Activated CD4-positive, alpha-beta T cell treated with anti-CD3 and anti-CD28 coated beads for 36 hours (primary cell): ENCODE measurements at regions of chr14 and their contacts with region 1.

Region 1: GRCh38 chr14:71320107-71320733 is 413.0 kb downstream of the PCNX1 start:
- DNase-seq: peak; percentile 99
- ATAC-seq: peak; percentile 87
- H3K4me3 Mint-ChIP-seq: peak within 1 kb of the TSS; percentile 92
- H3K27ac Mint-ChIP-seq: peak within 1 kb of the TSS; percentile 89
- H3K4me1 Mint-ChIP-seq: peaks cover 39% of the 10 kb centered on the region
- H3K27me3 Mint-ChIP-seq: no peaks in the 10 kb centered on the region

Region 2: GRCh38 chr14:70655110-70655826 is 665.0 kb before region 1 on chr14:
- CTCF ChIA-PET with region 1: no interaction called
- POLR2A ChIA-PET with region 1: no interaction called
- intact Hi-C with region 1: loop called in 1 of 2 experiments (anchors 10 kb)
- DNase-seq: peak; percentile 82
- ATAC-seq: peak; percentile 80
- H3K4me3 Mint-ChIP-seq: peak overlapping the region; percentile 76
- H3K27ac Mint-ChIP-seq: peak overlapping the region; percentile 99
- H3K4me1 Mint-ChIP-seq: peaks cover 90% of the 10 kb centered on the region
- H3K27me3 Mint-ChIP-seq: no peaks in the 10 kb centered on the region

Region 3: GRCh38 chr14:71021347-71022014 is 298.7 kb before region 1 on chr14:
- CTCF ChIA-PET with region 1: no interaction called
- POLR2A ChIA-PET with region 1: interaction called, 3 read pairs
- intact Hi-C with region 1: loop called in 1 of 2 experiments (anchors 1 kb)
- DNase-seq: no peak
- ATAC-seq: peak; percentile 86
- H3K4me3 Mint-ChIP-seq: peak overlapping the region; percentile 4
- H3K27ac Mint-ChIP-seq: peak overlapping the region; percentile 68
- H3K4me1 Mint-ChIP-seq: peaks cover 33% of the 10 kb centered on the region
- H3K27me3 Mint-ChIP-seq: no peaks in the 10 kb centered on the region

Region 4: GRCh38 chr14:71267007-71267513 is 53.2 kb before region 1 on chr14:
- CTCF ChIA-PET with region 1: no interaction called
- POLR2A ChIA-PET with region 1: no interaction called
- intact Hi-C with region 1: loop called (anchors 1 to 2 kb)
- DNase-seq: peak; percentile 26
- ATAC-seq: peak; percentile 88
- H3K4me3 Mint-ChIP-seq: no peak overlapping the region
- H3K27ac Mint-ChIP-seq: no peak overlapping the region
- H3K4me1 Mint-ChIP-seq: peaks cover 19% of the 10 kb centered on the region
- H3K27me3 Mint-ChIP-seq: no peaks in the 10 kb centered on the region

Region 5: GRCh38 chr14:71371711-71372396 is 51.6 kb after region 1 on chr14:
- CTCF ChIA-PET with region 1: interaction called, 3 read pairs
- POLR2A ChIA-PET with region 1: no interaction called
- intact Hi-C with region 1: loop called in 1 of 2 experiments (anchors 5 kb)
- DNase-seq: peak; percentile 20
- ATAC-seq: peak; percentile 97
- H3K4me3 Mint-ChIP-seq: no peak overlapping the region
- H3K27ac Mint-ChIP-seq: no peak overlapping the region
- H3K4me1 Mint-ChIP-seq: peaks cover 24% of the 10 kb centered on the region
- H3K27me3 Mint-ChIP-seq: no peaks in the 10 kb centered on the region

Region 6: GRCh38 chr14:71555654-71556559 is 235.7 kb after region 1 on chr14:
- CTCF ChIA-PET with region 1: interaction called, 5 read pairs
- POLR2A ChIA-PET with region 1: interaction called, 11 read pairs
- intact Hi-C with region 1: loop called (anchors 1 kb)
- DNase-seq: peak; percentile 81
- ATAC-seq: peak; percentile 86
- H3K4me3 Mint-ChIP-seq: peak overlapping the region; percentile 50
- H3K27ac Mint-ChIP-seq: peak overlapping the region; percentile 98
- H3K4me1 Mint-ChIP-seq: peaks cover 76% of the 10 kb centered on the region
- H3K27me3 Mint-ChIP-seq: no peaks in the 10 kb centered on the region